ENCODE measurements at regions of chr10 and their contacts with region 1.

Region 1: DNA sequence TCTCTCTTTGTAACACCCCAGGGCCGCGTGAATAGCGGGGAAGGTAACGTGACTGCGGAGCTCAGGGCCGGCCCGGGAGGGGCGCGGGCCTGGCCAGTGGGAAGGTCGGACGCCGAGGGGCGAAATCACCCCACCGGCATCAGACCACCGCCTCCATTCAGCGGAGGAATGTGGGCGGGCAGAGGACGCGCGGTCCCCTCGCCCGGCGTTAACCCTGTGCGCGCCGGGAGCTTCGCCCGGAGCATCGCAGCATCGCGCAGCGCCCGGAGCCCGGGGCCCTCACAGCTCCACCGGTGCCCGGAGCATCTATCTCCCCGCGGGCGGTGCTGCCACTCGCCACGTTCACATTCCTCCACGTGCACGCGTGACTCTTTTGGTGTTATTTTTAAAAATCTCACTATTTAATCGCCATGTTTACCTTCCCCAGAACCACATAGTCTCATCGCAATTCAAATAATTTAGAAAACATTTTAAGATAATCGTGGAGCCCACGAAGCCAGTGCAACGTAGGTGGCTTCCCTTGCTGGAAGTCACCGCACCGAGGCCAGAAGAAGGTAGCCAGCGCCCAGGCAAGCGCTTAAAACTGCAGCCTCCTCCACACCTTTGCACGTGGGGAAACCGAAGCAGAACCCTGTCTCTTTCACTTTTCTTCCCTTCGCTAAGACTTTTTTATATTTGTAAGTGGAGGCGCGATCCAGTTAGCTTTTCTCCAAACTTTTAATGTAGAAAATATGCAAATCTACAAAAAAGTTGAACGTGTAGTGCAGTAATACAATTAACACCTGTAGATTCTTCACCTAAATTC is 21.8 kb downstream of the FGFBP3 start:
- DNase-seq: peak; percentile 15
- H3K4me3 ChIP-seq: peak overlapping the region; percentile 17 to 49 (median 37)
- H3K27ac ChIP-seq: no peak overlapping the region
- H3K4me1 ChIP-seq: peaks cover 0 to 18% (median 10%) of the 10 kb centered on the region in 4 donors
- H3K27me3 ChIP-seq: peaks cover 25% of the 10 kb centered on the region
- CTCF ChIP-seq: no peak
- EP300 ChIP-seq: no peak
- POLR2A ChIP-seq: no peak

Region 2: DNA sequence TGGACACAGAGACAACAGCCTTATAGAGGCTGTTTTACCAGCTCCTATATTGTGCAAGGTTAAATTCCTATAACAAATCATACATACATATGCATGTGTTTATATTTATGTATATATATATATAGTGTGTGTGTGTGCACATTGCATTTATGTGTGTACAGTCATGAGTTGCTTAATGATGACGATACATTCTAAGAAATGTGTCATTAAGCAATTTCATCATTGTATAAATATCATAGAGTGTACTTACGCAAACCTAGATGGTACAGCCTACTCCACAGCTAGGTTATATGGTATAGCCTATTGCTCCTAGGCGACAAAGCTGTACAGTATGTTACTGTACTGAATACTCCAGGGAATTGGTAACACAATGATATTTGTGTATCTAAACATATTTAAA is 119.4 kb before region 1 on chr10:
- in situ Hi-C with region 1: loop called in 1 of 4 experiments (anchors 10 kb)
- intact Hi-C with region 1: no loop called
- DNase-seq: no peak
- H3K4me3 ChIP-seq: no peak overlapping the region
- H3K27ac ChIP-seq: no peak overlapping the region
- H3K4me1 ChIP-seq: no peaks in the 10 kb centered on the region
- H3K27me3 ChIP-seq: no peaks in the 10 kb centered on the region
- CTCF ChIP-seq: no peak
- EP300 ChIP-seq: no peak
- POLR2A ChIP-seq: no peak

Region 3: DNA sequence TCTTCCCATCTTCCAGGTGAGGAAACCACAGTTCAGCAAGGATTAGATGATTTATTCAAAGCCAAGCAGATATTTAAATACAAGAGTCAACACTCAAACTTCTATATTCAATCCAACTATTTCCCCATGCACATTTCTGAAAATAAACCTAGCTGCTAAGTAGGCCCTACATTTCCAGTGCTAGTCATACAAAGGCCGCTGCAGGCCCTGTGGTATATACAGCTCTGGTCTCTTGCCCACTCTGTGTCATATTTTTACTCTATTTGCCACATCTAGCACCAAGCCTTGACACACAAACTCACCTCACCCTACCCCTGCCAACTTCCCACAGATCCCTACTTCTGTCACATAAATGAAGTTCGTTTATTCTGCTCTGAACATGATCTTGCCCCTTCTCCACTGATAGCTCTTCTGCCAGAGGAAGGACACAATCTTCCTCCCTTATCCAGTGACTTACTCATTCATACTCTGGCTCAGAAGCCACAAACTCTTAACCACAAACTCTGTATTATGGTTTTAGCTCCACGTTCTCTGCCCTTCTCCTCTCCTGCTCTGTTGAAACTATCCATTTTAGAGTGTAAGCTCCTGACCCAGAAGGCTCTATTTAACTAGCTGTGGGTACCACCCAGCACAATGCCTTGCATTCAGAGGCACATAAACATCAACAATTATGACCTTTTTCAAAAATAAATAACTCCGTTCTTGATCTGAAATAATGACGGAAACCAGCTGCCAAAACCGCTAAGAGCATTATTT is 222.7 kb after region 1 on chr10:
- in situ Hi-C with region 1: no loop called
- intact Hi-C with region 1: no loop called
- DNase-seq: no peak
- H3K4me3 ChIP-seq: no peak overlapping the region
- H3K27ac ChIP-seq: no peak overlapping the region
- H3K4me1 ChIP-seq: peaks cover 0 to 10% (median 4%) of the 10 kb centered on the region in 4 donors
- H3K27me3 ChIP-seq: no peaks in the 10 kb centered on the region
- CTCF ChIP-seq: no peak
- EP300 ChIP-seq: no peak
- POLR2A ChIP-seq: no peak

Measured in transverse colon (tissue), 4 donors.